Mammary epithelial cell (primary cell): ENCODE measurements at regions of chr17 and their contacts with region 1.

Region 1: DNA sequence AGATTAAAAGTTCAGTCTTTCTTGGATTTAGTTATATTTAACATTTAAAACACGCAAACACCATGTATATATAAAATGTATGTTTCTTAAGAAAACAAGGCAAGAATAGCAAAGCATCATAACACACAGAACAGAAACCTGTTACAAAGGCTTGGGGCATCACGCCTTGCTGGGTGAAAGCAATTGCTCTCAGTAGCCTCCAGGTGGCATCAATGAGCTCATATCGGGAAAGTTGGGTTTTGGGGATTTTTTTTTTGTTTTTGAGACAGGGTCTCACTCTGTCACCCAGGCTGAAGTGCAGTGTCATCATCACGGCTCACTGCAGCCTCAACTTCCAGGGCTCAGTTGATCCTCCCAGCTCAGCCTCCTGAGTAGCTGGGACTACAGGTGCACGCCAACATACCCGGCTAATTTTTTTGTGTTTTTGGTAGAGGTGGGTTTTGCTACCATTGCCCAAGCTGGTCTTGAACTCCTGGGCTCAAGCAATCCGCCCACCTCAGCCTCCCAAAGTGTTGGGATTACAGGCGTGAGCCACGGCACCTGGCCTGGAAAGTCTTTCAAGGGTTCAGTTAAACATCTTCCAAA is 56.9 kb downstream of the CYB5D2 start:
- DNase-seq: peak; percentile 13
- H3K4me3 ChIP-seq: no peak overlapping the region
- H3K27ac ChIP-seq: no peak overlapping the region
- H3K4me1 ChIP-seq: no peaks in the 10 kb centered on the region
- H3K27me3 ChIP-seq: no peaks in the 10 kb centered on the region
- CTCF ChIP-seq: peak; percentile 78 to 80

Region 2: DNA sequence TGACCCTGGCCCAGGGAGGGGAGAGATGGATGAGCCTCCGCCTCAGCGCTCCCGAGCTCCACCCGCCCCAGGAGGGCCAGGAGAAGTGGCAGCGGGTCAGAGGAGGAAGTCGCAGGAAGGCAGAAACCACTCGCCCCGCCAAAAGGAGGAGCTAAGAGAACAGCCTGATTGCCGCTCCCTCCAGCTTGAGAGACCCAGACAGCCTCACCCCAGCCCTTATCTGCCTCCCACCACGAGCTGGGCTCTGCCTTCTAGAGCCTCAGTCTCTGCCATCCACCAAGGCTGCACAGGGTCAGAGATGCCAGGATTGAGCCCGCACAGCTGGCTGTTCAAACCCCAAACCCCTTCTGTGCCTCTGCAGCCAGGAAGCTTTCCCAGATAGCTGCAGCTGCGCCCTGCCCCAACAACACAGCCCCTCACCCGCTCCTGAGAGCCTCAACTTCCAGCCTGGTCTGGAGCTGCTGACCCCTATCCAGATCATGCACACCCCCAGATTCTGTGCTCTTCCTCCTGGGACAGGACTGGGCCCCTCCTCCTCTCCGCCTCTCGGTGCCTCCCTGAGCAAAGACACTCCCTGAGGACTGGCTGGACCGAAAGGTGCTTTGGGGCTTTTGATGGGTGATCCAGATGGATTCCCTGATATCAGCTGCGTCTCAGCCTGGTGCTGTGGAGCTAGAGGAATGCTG is 234.6 kb before region 1 on chr17:
- CTCF ChIA-PET with region 1: no interaction called
- dilution Hi-C with region 1: no loop called
- in situ Hi-C with region 1: no loop called
- intact Hi-C with region 1: no loop called
- DNase-seq: peak; percentile 21
- H3K4me3 ChIP-seq: no peak overlapping the region
- H3K27ac ChIP-seq: no peak overlapping the region
- H3K4me1 ChIP-seq: peaks cover 4% of the 10 kb centered on the region
- H3K27me3 ChIP-seq: peaks cover 19% of the 10 kb centered on the region
- CTCF ChIP-seq: no peak

Region 3: DNA sequence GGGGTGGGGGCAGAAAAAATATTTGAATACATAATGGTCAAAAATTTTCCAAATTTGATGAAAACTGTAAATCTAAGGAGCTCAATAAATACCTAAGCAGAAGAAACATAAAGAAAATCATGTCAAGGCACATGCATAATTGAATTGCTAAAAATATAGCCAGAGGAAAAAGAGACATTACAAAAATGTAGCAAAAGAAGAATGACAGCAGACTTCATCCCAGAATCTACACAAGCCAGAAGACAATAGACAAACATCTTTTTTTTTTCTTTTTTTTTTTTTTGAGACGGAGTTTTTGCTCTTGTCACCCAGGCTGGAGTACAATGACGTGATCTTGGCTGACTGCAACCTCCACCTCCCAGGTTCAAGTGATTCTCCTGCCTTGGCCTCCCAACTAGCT is 173.7 kb before region 1 on chr17:
- CTCF ChIA-PET with region 1: interaction called, 11 read pairs
- dilution Hi-C with region 1: no loop called
- in situ Hi-C with region 1: no loop called
- intact Hi-C with region 1: no loop called
- DNase-seq: no peak
- H3K4me3 ChIP-seq: no peak overlapping the region
- H3K27ac ChIP-seq: no peak overlapping the region
- H3K4me1 ChIP-seq: no peaks in the 10 kb centered on the region
- H3K27me3 ChIP-seq: no peaks in the 10 kb centered on the region
- CTCF ChIP-seq: no peak

Region 4: DNA sequence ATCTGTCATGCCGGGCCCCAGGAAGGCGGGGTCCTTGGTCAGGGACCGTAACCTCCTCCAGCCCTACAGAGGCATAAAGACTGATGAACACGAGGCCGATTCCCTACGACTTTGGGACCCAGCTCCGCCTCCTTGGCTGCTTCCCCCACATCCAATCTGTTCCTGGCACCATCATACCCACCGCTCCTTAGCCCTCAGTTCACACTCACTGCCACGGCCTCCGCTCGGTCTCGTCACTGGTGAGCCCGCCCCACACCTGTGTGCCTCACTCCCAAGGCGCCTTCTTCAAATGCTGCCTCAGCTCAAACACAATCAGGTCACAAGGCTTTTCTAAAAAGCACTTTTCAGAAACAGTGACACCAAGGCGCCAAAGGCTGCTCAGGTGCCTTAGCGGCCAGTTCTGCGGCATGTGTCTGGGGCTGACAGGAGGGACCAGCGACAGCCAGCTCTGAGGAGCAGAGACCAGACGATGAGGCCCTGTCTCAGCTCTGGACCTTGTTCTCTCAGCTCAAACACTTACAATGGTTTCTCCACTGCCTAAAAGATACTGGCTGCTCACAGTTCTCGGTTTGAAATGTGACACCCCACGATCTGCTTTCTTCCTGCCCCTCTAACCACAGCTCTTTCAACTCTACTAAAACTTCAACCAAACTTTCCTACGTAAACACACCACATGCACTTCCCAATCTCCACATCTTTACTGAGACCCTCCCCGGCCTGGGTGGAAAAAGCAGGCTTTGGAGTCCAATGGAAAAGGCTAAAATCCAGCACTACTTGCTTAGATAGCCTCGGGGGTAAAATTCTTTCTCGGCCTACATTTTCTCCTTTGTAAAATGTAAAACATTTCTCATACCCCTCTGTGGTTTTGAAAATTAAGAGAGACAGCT is 23.7 kb before region 1 on chr17:
- CTCF ChIA-PET with region 1: no interaction called
- dilution Hi-C with region 1: no loop called
- in situ Hi-C with region 1: no loop called
- intact Hi-C with region 1: no loop called
- DNase-seq: no peak
- H3K4me3 ChIP-seq: no peak overlapping the region
- H3K27ac ChIP-seq: no peak overlapping the region
- H3K4me1 ChIP-seq: no peaks in the 10 kb centered on the region
- H3K27me3 ChIP-seq: no peaks in the 10 kb centered on the region
- CTCF ChIP-seq: no peak

Region 5: DNA sequence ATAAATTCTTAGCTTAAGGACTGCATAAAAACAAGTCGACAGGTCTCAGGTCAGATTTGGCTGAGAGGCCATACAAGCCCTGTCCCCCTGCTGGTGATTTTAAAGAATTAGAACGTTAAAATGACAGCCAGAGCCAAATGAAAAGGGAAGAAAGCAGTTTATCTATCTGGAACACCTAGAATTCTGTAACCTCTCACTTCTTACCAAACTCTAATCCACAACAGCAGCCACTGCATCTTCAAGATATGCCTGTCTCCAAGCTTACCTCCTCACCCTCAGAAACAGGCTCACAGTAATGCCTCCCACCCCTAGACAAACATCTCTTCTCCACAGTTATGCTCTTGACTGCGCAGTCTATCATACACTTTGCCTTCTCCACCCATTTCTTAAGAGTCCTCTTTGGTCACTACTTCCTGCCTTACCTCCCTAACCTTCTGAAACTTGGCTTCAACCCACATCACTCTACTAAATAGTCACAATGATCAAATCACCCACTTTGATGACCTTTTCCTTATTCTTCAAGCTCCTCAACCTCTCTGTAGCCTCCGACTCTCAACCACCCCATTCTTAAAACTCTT is 49.6 kb after region 1 on chr17:
- CTCF ChIA-PET with region 1: no interaction called
- dilution Hi-C with region 1: no loop called
- in situ Hi-C with region 1: no loop called
- intact Hi-C with region 1: no loop called
- DNase-seq: peak; percentile 32
- H3K4me3 ChIP-seq: no peak overlapping the region
- H3K27ac ChIP-seq: peak overlapping the region; percentile 96
- H3K4me1 ChIP-seq: peaks cover 27% of the 10 kb centered on the region
- H3K27me3 ChIP-seq: no peaks in the 10 kb centered on the region
- CTCF ChIP-seq: peak; percentile 65 to 66

Region 6: DNA sequence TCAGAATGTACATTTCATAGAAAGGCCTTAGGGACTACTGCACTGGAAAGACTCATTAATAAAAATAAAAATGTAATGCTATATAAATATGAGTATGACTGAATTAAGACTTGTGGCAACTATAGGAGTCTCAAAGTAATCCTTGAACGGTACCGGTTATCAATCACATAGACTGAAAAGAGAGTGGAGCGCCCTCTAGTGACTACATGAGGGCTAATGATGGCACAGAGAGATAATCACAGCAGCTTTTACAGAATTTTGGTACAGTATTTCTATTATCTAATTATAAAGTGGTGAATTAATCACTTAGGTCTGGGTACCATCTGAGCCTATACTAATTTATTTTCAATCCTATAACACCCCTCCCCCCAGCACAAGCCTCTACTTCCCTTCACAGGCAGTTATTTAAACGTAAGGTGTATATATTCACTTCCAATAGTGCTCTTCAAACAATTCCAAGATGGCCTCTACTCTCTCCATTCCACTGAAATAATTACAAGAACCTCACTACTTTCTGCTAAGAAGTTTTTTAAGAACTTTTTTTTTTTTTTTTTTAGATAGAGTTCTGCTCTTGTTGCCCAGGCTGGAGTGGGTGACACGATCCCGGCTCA is 104.6 kb after region 1 on chr17:
- CTCF ChIA-PET with region 1: no interaction called
- dilution Hi-C with region 1: no loop called
- in situ Hi-C with region 1: no loop called
- intact Hi-C with region 1: loop called (anchors 1 kb)
- DNase-seq: peak; percentile 35
- H3K4me3 ChIP-seq: no peak overlapping the region
- H3K27ac ChIP-seq: no peak overlapping the region
- H3K4me1 ChIP-seq: no peaks in the 10 kb centered on the region
- H3K27me3 ChIP-seq: no peaks in the 10 kb centered on the region
- CTCF ChIP-seq: peak; percentile 69 to 73